Naive thymus-derived CD4-positive, alpha-beta T cell (primary cell): ENCODE measurements at regions of chr9 and their contacts with region 1.

Region 1: GRCh38 chr9:5832543-5833529 is at the start of gene ERMP1:
- DNase-seq: peak; percentile 83 to 94 (median 91)
- ATAC-seq: peak; percentile 95
- H3K4me3 ChIP-seq: peak within 1 kb of the TSS; percentile 85
- H3K4me3 Mint-ChIP-seq: peak within 1 kb of the TSS; percentile 91 to 99 (median 95)
- H3K27ac ChIP-seq: peak within 1 kb of the TSS; percentile 60
- H3K27ac Mint-ChIP-seq: peak within 1 kb of the TSS; percentile 79 to 96 (median 89)
- H3K4me1 ChIP-seq: peaks cover 25 to 33% of the 10 kb centered on the region in 2 donors
- H3K4me1 Mint-ChIP-seq: peaks cover 28 to 71% (median 60%) of the 10 kb centered on the region in 7 donors
- H3K27me3 ChIP-seq: no peaks in the 10 kb centered on the region
- H3K27me3 Mint-ChIP-seq: no peaks in the 10 kb centered on the region
- total RNA-seq, gene ERMP1: 9.5 to 37.1 (median 20.0) TPM

Region 2: DNA sequence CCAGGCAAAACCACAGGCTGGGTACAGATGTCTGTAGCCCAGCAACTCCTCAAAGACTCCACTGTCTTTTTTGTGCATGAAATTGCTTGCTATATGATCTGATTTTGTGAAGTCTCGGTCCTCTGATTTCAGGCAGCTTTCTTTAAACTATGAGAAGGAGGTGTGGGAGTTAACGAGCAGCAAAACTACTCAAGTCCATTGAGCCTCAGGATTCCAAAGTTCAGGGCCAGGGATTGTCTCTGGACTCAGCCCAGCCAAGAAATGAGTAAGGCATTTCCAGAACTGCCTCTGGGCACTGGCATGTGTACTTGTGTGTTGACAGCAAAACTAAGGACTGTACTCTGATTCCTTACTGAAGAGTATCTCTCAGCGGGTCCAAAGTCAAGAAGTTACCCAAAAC is 1479.6 kb before region 1 on chr9:
- CTCF ChIA-PET with region 1: no interaction called
- POLR2A ChIA-PET with region 1: no interaction called
- intact Hi-C with region 1: no loop called
- DNase-seq: no peak
- ATAC-seq: no peak
- H3K4me3 ChIP-seq: no peak overlapping the region
- H3K4me3 Mint-ChIP-seq: no peak overlapping the region
- H3K27ac ChIP-seq: no peak overlapping the region
- H3K27ac Mint-ChIP-seq: no peak overlapping the region
- H3K4me1 ChIP-seq: no peaks in the 10 kb centered on the region
- H3K4me1 Mint-ChIP-seq: no peaks in the 10 kb centered on the region
- H3K27me3 ChIP-seq: no peaks in the 10 kb centered on the region
- H3K27me3 Mint-ChIP-seq: peaks cover 0 to 14% (median 0%) of the 10 kb centered on the region in 5 donors

Region 3: GRCh38 chr9:4662108-4662988 is 1170.5 kb before region 1 on chr9 and contains the start of gene PLPP6:
- CTCF ChIA-PET with region 1: no interaction called
- POLR2A ChIA-PET with region 1: interaction called, 3 read pairs
- intact Hi-C with region 1: loop called in 1 of 2 experiments (anchors 10 kb)
- DNase-seq: peak; percentile 55 to 81 (median 76)
- ATAC-seq: peak; percentile 86
- H3K4me3 ChIP-seq: peak within 1 kb of the TSS; percentile 63
- H3K4me3 Mint-ChIP-seq: peak within 1 kb of the TSS; percentile 89 to 98 (median 96)
- H3K27ac ChIP-seq: peak within 1 kb of the TSS; percentile 78
- H3K27ac Mint-ChIP-seq: peak within 1 kb of the TSS; percentile 85 to 98 (median 95)
- H3K4me1 ChIP-seq: peaks cover 21 to 50% of the 10 kb centered on the region in 2 donors
- H3K4me1 Mint-ChIP-seq: peaks cover 41 to 80% (median 64%) of the 10 kb centered on the region in 7 donors
- H3K27me3 ChIP-seq: no peaks in the 10 kb centered on the region
- H3K27me3 Mint-ChIP-seq: peaks cover 0 to 12% (median 0%) of the 10 kb centered on the region in 5 donors
- total RNA-seq, gene PLPP6: 7.4 to 24.1 (median 10.2) TPM

Region 4: GRCh38 chr9:5437254-5438216 is 395.3 kb before region 1 on chr9 and contains the start of gene PLGRKT:
- CTCF ChIA-PET with region 1: no interaction called
- POLR2A ChIA-PET with region 1: no interaction called
- intact Hi-C with region 1: loop called in 1 of 2 experiments (anchors 5 kb)
- DNase-seq: peak; percentile 77 to 91 (median 89)
- ATAC-seq: peak; percentile 96
- H3K4me3 ChIP-seq: peak within 1 kb of the TSS; percentile 84
- H3K4me3 Mint-ChIP-seq: peak within 1 kb of the TSS; percentile 86 to 98 (median 96)
- H3K27ac ChIP-seq: peak within 1 kb of the TSS; percentile 81
- H3K27ac Mint-ChIP-seq: peak within 1 kb of the TSS; percentile 90 to 100 (median 98)
- H3K4me1 ChIP-seq: peaks cover 18 to 19% of the 10 kb centered on the region in 2 donors
- H3K4me1 Mint-ChIP-seq: peaks cover 7 to 50% (median 36%) of the 10 kb centered on the region in 7 donors
- H3K27me3 ChIP-seq: no peaks in the 10 kb centered on the region
- H3K27me3 Mint-ChIP-seq: no peaks in the 10 kb centered on the region
- total RNA-seq, gene PLGRKT: 15.8 to 31.7 (median 16.8) TPM

Region 5: DNA sequence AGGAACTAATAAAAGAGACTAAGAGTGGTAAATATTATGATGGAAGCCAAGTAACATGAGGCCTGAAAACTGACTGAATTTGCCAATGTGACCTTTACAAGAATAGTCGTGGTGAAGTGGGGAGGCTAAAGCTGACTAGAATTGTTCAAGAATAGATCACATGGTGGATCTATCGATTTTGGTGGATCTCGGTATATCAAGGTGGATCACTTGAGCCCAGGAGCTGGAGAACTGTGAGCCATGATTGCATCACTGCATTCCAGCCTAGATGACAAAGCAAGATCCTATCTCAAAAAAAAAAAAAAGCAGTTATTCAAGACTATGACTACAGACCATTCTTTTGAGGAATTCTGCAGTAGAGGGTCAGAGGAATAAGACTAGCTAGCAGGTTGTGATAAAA is 15.0 kb before region 1 on chr9:
- CTCF ChIA-PET with region 1: interaction called, 3 read pairs
- POLR2A ChIA-PET with region 1: no interaction called
- intact Hi-C with region 1: loop called in 1 of 2 experiments (anchors 1 kb)
- DNase-seq: no peak
- ATAC-seq: no peak
- H3K4me3 ChIP-seq: no peak overlapping the region
- H3K4me3 Mint-ChIP-seq: no peak overlapping the region
- H3K27ac ChIP-seq: no peak overlapping the region
- H3K27ac Mint-ChIP-seq: no peak overlapping the region
- H3K4me1 ChIP-seq: no peaks in the 10 kb centered on the region
- H3K4me1 Mint-ChIP-seq: peaks cover 6 to 18% (median 15%) of the 10 kb centered on the region in 7 donors
- H3K27me3 ChIP-seq: no peaks in the 10 kb centered on the region
- H3K27me3 Mint-ChIP-seq: no peaks in the 10 kb centered on the region

Region 6: DNA sequence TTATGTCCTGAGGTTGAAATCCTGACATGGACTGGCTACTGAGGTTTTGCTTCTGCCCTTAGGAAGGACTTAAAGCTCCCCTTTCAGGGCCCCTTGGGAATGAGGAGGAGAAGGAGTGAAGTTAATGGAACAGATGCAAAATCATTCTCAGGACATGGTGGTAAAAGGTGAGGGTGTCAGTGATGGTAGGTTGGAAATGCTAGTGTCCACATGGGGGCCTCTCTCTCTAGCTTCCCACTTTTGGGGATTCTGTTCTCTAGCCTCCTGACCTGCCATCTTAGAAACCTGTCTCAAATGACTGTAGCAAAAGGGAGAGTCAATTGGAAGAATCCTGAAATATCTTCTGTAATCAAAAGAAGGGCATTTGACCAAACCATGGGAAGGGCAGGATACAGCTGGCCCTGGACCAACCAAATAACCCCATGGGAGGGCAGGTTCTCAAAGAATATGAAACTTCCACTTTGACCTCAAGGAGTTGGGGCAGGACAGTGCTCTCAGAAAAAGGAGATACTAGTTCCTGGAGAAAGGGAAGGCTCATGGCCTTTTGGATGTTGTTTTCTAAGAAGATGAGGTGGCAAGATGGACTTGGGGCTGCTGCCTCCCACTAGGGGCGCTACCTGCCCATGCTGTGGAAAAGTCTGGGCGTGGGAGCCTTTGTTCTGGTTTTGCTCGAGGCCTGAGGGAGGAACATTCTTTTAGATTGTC is 36.6 kb after region 1 on chr9:
- CTCF ChIA-PET with region 1: no interaction called
- POLR2A ChIA-PET with region 1: no interaction called
- intact Hi-C with region 1: loop called in 1 of 2 experiments (anchors 2 kb)
- DNase-seq: peak in 1 of 9 donors; percentile 16
- ATAC-seq: no peak
- H3K4me3 ChIP-seq: no peak overlapping the region
- H3K4me3 Mint-ChIP-seq: no peak overlapping the region
- H3K27ac ChIP-seq: no peak overlapping the region
- H3K27ac Mint-ChIP-seq: no peak overlapping the region
- H3K4me1 ChIP-seq: no peaks in the 10 kb centered on the region
- H3K4me1 Mint-ChIP-seq: peaks cover 6 to 21% (median 11%) of the 10 kb centered on the region in 7 donors
- H3K27me3 ChIP-seq: no peaks in the 10 kb centered on the region
- H3K27me3 Mint-ChIP-seq: no peaks in the 10 kb centered on the region

Region 7: DNA sequence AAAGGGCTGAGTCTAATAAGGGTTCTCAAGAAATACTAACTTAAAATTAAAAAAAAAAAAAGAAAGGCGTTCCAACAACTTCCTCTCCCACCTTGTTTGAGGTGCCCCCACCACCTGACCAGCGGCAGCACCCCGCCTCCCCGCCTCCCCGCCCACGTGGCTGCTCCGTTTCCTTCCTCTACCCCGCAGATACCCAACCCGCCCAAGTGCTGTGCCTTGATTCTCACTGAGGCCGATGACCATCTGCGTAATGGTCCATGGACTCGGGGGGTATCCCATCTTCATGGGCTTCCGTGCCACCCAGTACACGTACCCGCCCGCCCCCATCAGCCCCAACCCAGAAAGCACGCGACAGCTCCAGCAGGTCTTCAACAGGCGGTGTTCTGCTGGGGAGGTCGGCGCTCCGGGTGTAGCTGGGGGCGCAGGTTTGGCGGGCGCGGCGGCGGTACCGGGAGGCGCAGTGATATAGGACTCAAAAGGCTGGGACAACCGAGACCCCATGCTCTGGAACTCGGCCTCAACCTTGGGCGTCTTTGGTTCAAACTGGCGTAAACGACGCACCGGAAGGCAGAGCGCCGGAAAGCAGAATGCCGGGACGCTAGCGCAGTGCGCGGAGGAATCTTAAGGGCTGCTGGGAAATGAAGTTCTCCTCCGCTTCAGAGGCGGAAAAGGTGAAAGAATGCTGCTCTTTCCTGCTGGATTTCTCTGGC is 1966.6 kb after region 1 on chr9 and contains the start of gene DMAC1:
- CTCF ChIA-PET with region 1: no interaction called
- POLR2A ChIA-PET with region 1: no interaction called
- intact Hi-C with region 1: loop called in 1 of 2 experiments (anchors 5 kb)
- DNase-seq: peak; percentile 50 to 79 (median 72)
- ATAC-seq: peak; percentile 96
- H3K4me3 ChIP-seq: peak within 1 kb of the TSS; percentile 96
- H3K4me3 Mint-ChIP-seq: peak within 1 kb of the TSS; percentile 91 to 98 (median 95)
- H3K27ac ChIP-seq: peak within 1 kb of the TSS; percentile 88
- H3K27ac Mint-ChIP-seq: peak within 1 kb of the TSS; percentile 90 to 98 (median 93)
- H3K4me1 ChIP-seq: peaks cover 0 to 8% of the 10 kb centered on the region in 2 donors
- H3K4me1 Mint-ChIP-seq: peaks cover 12 to 62% (median 40%) of the 10 kb centered on the region in 7 donors
- H3K27me3 ChIP-seq: no peaks in the 10 kb centered on the region
- H3K27me3 Mint-ChIP-seq: peaks cover 0 to under 1% (median 0%) of the 10 kb centered on the region in 5 donors
- total RNA-seq, gene DMAC1: 17.5 to 54.1 (median 44.3) TPM